Activated CD4-positive, alpha-beta T cell treated with anti-CD3 and anti-CD28 coated beads for 36 hours (primary cell): ENCODE measurements at regions of chr5 and their contacts with region 1.

Region 1: GRCh38 chr5:179697993-179698934 is 503 bp upstream of the CANX start:
- DNase-seq: peak; percentile 99
- ATAC-seq: peak; percentile 89
- H3K4me3 Mint-ChIP-seq: peak overlapping the region; percentile 94
- H3K27ac Mint-ChIP-seq: peak overlapping the region; percentile 100
- H3K4me1 Mint-ChIP-seq: peaks cover 34% of the 10 kb centered on the region
- H3K27me3 Mint-ChIP-seq: no peaks in the 10 kb centered on the region

Region 2: DNA sequence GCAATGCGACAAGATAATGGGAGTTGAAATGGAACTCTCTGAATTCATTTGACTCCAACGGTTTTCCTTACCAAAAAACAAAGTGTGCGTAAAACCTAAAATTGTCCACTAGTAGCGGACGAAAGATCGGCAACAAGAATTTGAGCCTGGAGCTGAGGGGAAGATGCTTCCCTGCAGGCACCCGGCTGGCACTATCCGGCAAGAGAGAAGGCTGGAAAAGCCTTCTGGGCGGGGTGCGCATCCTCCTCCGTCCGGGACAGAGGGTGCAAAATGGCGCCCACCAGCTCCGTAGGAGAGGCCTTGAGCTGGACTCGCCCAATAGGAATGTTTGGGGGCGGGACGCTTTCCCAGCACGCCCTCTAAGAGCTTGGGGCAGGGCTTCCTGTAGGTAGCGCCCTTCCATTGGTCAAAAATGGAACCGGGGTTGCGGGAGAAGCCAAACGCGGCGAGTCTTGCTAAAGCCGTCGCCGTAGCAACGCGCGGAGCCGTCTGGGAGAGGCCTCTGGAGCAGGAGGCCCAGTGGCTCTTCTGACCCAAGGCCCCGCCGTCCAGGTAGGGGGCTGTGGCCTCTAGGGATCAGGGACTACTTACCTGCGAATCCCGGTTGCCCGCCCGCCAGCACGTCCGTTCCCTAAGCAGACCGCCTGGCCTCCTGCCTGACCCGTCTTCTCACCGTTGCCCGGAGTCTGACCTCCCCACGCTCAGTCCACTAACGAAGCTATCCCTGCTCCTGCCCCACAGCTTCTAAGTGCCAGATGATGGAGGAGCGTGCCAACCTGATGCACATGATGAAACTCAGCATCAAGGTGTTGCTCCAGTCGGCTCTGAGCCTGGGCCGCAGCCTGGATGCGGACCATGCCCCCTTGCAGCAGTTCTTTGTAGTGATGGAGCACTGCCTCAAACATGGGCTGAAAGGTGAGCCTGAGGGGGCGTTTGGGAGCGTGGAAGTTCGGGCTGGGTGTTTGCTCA is 138.7 kb before region 1 on chr5:
- CTCF ChIA-PET with region 1: no interaction called
- POLR2A ChIA-PET with region 1: interaction called, 6 read pairs
- intact Hi-C with region 1: loop called in 1 of 2 experiments (anchors 1 kb)
- DNase-seq: peak; percentile 97
- ATAC-seq: peak; percentile 100
- H3K4me3 Mint-ChIP-seq: peak overlapping the region; percentile 82
- H3K27ac Mint-ChIP-seq: peak overlapping the region; percentile 80
- H3K4me1 Mint-ChIP-seq: peaks cover 17% of the 10 kb centered on the region
- H3K27me3 Mint-ChIP-seq: no peaks in the 10 kb centered on the region

Region 3: DNA sequence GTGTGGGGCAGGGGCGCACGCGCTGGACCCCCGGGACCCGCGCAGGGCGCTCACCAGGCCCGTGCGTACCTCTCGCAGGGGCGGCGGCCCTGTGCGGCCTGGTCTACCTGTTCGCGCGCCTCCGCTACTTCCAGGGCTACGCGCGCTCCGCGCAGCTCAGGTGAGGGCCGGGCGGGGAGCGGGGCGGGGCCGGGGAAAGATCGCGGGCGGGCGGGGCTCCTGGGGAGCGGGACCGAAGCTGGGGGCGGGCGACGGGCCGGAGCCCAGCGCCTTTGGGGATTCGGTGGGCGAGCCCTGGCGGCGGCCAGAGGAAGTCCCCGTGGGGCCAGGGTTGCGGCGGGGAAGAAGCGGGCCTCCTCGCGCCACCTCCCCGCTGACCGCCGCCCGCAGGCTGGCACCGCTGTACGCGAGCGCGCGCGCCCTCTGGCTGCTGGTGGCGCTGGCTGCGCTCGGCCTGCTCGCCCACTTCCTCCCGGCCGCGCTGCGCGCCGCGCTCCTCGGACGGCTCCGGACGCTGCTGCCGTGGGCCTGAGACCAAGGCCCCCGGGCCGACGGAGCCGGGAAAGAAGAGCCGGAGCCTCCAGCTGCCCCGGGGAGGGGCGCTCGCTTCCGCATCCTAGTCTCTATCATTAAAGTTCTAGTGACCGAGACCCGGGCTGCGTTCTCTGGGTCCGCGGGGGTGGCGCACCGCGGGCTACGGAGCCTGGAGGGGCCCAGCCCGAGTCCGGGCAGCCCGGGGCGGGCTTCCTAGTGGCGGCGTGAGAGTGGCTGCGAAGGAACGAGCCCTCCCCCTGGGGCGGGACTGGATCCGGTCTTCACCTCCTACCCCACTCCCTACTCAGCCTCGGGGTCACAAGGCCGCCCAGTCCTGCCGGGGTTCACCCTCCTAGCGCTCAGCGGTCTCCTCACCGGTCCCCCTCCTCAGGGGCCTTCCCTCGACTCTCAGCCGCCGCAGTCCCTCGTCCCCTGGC is 97.9 kb after region 1 on chr5:
- CTCF ChIA-PET with region 1: no interaction called
- POLR2A ChIA-PET with region 1: no interaction called
- intact Hi-C with region 1: loop called in 1 of 2 experiments (anchors 1 kb)
- DNase-seq: peak; percentile 87
- ATAC-seq: peak; percentile 80
- H3K4me3 Mint-ChIP-seq: peak overlapping the region; percentile 64
- H3K27ac Mint-ChIP-seq: no peak overlapping the region
- H3K4me1 Mint-ChIP-seq: peaks cover 25% of the 10 kb centered on the region
- H3K27me3 Mint-ChIP-seq: no peaks in the 10 kb centered on the region

Region 4: DNA sequence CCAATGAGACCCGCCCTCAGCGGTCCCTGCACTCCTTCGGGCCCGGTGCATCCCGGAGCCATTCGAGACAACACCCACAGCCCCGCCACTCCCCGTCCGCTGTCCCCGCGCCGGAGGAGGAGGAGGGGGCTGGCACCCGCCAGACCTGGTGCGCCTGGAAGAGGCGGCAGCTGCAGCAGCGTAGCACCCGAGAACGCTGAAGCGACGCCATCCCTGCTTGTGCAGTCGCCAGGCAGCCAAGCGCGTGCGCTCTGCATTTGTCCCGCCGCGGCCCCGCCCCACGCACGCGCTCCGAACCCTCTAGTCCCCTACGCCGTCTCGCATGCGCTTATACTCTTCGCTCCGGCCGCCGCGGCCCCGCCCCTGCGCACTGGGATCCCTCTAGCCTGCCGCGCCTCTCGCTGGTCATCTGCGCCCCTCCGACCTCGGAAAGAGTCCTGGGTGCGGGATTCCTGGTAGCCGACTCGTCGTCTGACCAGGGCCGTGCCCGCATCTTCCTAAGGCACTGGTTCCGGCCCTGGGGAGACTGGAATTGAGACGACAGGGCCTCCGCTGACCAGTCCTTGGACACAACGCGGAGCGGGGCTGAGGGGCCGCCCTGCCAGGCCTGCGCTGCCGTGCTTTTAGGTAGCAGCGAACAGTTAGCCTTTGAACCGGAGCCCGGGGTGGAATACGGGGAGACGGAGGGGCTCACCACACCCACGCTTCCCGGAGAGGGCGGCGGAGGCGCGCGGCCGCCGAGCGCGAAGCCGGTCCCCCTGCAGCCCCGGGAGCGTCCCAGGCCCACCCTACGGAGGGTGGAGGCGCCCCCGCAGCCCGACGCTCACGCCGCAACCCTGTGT is 160.5 kb after region 1 on chr5 and contains the start of gene MRNIP:
- CTCF ChIA-PET with region 1: no interaction called
- POLR2A ChIA-PET with region 1: no interaction called
- intact Hi-C with region 1: loop called in 1 of 2 experiments (anchors 1 kb)
- DNase-seq: peak; percentile 95
- ATAC-seq: peak; percentile 98
- H3K4me3 Mint-ChIP-seq: peak within 1 kb of the TSS; percentile 84
- H3K27ac Mint-ChIP-seq: peak within 1 kb of the TSS; percentile 85
- H3K4me1 Mint-ChIP-seq: peaks cover 6% of the 10 kb centered on the region
- H3K27me3 Mint-ChIP-seq: no peaks in the 10 kb centered on the region
- total RNA-seq, gene MRNIP: 19.4 to 19.7 TPM